ENCODE measurements at regions of chr10 and their contacts with region 1.

Region 1: GRCh38 chr10:124992462-124993344 is 50.8 kb downstream of the ZRANB1 start:
- DNase-seq: peak in 4 of 5 donors; percentile 76 to 84 (median 82)
- ATAC-seq: peak; percentile 68 to 73 (median 71)
- H3K4me3 ChIP-seq: no peak overlapping the region
- H3K27ac ChIP-seq: peak overlapping the region in 4 of 12 donors; percentile 1 to 22 (median 14)
- H3K4me1 ChIP-seq: peaks cover 0 to 21% (median 5%) of the 10 kb centered on the region in 12 donors
- H3K27me3 ChIP-seq: no peaks in the 10 kb centered on the region
- CTCF ChIP-seq: peak; percentile 62 to 84 (median 81)
- POLR2A ChIP-seq: no peak

Region 2: GRCh38 chr10:124231168-124232155 is 761.2 kb before region 1 on chr10:
- intact Hi-C with region 1: no loop called
- DNase-seq: no peak
- ATAC-seq: no peak
- H3K4me3 ChIP-seq: no peak overlapping the region
- H3K27ac ChIP-seq: no peak overlapping the region
- H3K4me1 ChIP-seq: peaks cover 0 to 11% (median 4%) of the 10 kb centered on the region in 12 donors
- H3K27me3 ChIP-seq: peaks cover 0 to 4% (median 0%) of the 10 kb centered on the region in 9 donors
- CTCF ChIP-seq: no peak
- POLR2A ChIP-seq: no peak

Region 3: GRCh38 chr10:125038637-125039036 is 45.9 kb after region 1 on chr10:
- intact Hi-C with region 1: no loop called
- DNase-seq: peak in 3 of 5 donors; percentile 69 to 77 (median 76)
- ATAC-seq: peak; percentile 89 to 96 (median 92)
- H3K4me3 ChIP-seq: no peak overlapping the region
- H3K27ac ChIP-seq: peak overlapping the region in 6 of 12 donors; percentile 9 to 58 (median 33)
- H3K4me1 ChIP-seq: peaks cover 6 to 74% (median 45%) of the 10 kb centered on the region in 12 donors
- H3K27me3 ChIP-seq: no peaks in the 10 kb centered on the region
- CTCF ChIP-seq: peak in 9 of 12 donors; percentile 9 to 48 (median 30)
- POLR2A ChIP-seq: no peak

Region 4: GRCh38 chr10:125337510-125337909 is 344.8 kb after region 1 on chr10:
- intact Hi-C with region 1: loop called in 5 of 10 experiments (anchors 2 to 10 kb)
- DNase-seq: no peak
- ATAC-seq: no peak
- H3K4me3 ChIP-seq: no peak overlapping the region
- H3K27ac ChIP-seq: no peak overlapping the region
- H3K4me1 ChIP-seq: peaks cover 0 to 12% (median 0%) of the 10 kb centered on the region in 12 donors
- H3K27me3 ChIP-seq: no peaks in the 10 kb centered on the region
- CTCF ChIP-seq: no peak
- POLR2A ChIP-seq: no peak

Region 5: DNA sequence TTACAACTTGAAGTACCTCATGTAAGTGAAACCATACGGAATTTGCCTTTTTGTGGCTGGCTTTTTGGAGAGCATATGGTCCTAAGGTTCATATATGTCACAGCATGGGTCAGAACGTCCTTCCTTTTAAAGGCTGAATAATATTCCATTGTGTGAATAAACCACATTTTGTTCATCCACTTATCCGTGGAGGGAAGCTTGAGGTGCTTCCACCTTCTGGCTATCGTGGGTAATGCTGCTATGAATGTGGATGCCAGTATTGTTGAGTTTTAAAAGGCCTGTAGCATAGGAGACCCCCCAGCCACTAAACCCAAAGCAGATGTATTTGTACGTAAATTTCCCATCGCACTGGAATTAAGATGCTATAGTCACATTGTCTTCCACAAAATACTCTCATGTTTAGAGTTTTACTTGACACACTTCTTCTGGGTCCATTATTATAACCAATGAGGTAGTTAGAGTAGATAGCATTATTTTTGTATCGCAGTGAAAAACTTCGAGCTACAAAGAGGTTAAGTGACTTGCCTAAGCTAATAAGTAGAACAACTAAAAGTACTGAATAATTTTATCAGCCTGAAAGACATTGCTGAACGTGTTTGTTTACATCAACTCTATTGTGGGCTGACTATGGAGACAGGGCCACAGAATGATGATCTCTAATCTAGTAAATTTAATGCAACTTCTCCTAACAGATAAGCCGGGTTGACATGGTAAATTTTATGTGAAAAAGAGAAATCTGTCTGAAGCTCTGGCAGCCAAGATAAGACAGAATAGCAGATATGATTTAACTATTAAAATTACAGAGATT is 350.6 kb after region 1 on chr10:
- intact Hi-C with region 1: loop called in 4 of 10 experiments (anchors 2 to 10 kb)
- DNase-seq: no peak
- ATAC-seq: peak in 1 of 4 donors; percentile 7
- H3K4me3 ChIP-seq: no peak overlapping the region
- H3K27ac ChIP-seq: no peak overlapping the region
- H3K4me1 ChIP-seq: no peaks in the 10 kb centered on the region
- H3K27me3 ChIP-seq: peaks cover 0 to 3% (median 0%) of the 10 kb centered on the region in 9 donors
- CTCF ChIP-seq: peak; percentile 48 to 76 (median 60)
- POLR2A ChIP-seq: no peak